ENCODE measurements at regions of chr6 and their contacts with region 1.

Region 1: GRCh38 chr6:3125815-3126214 is 7.3 kb downstream of the BPHL start:
- DNase-seq: no peak
- ATAC-seq: no peak
- H3K4me3 ChIP-seq: no peak overlapping the region
- H3K27ac ChIP-seq: no peak overlapping the region
- H3K4me1 ChIP-seq: no peaks in the 10 kb centered on the region
- H3K27me3 ChIP-seq: no peaks in the 10 kb centered on the region
- CTCF ChIP-seq: no peak
- POLR2A ChIP-seq: no peak
- RAD21 ChIP-seq: no peak

Region 2: GRCh38 chr6:2547355-2547754 is 578.5 kb before region 1 on chr6:
- CTCF ChIA-PET with region 1: no interaction called
- POLR2A ChIA-PET with region 1: no interaction called
- dilution Hi-C with region 1: no loop called
- in situ Hi-C with region 1: no loop called
- intact Hi-C with region 1: no loop called
- DNase-seq: no peak
- ATAC-seq: no peak
- H3K4me3 ChIP-seq: no peak overlapping the region
- H3K27ac ChIP-seq: no peak overlapping the region
- H3K4me1 ChIP-seq: peaks cover 8% of the 10 kb centered on the region
- H3K27me3 ChIP-seq: peaks cover 25% of the 10 kb centered on the region
- CTCF ChIP-seq: no peak
- POLR2A ChIP-seq: no peak
- RAD21 ChIP-seq: no peak

Region 3: DNA sequence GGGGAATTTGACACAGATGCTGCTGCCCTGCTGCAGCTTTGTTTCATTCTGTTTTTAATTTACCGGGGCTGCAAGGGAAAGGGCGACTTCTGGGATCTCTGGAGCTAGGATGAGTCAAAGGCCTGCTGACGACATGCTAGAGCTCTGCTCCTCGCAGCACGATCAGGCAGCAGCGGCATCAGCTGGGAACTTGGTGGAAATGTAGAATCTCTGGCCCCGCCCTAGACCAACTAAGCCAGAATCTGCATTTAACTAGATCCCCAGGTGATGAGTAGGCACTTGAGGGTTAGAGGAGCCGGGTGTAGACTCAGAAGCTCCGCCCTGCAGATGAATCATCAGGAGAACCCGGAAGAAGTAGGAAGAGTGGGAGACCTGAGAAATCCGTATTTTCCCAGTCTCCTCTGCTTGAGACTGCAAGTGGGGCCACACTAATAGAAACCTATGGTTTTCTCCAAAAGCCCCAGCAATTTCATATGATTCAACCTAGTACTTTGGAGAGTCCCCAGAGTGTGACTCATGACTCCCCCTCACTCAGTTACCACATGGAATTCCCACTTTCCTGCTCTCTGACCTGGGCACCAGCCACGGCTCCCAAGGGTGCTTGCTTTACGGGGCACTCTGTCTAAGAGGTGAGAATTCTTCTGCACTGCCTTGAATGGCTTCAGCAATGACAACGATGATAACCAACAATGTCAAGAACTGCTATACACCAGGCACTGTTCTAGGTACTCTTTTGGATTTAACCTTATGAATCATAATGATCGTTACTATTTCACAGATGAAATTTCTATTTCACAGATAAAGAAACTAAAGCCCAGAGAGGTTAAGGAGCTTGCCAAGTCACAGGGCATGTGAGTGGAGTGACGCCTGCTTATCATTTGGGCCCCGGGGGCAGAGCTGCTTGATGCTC is 83.6 kb after region 1 on chr6:
- CTCF ChIA-PET with region 1: interaction called, 4 read pairs
- POLR2A ChIA-PET with region 1: no interaction called
- dilution Hi-C with region 1: no loop called
- in situ Hi-C with region 1: no loop called
- intact Hi-C with region 1: loop called (anchors 1 kb)
- DNase-seq: peak; percentile 98
- ATAC-seq: peak; percentile 82
- H3K4me3 ChIP-seq: no peak overlapping the region
- H3K27ac ChIP-seq: peak overlapping the region; percentile 33; the same call in 1 of the 2 replicates
- H3K4me1 ChIP-seq: peaks cover 18% of the 10 kb centered on the region
- H3K27me3 ChIP-seq: no peaks in the 10 kb centered on the region
- CTCF ChIP-seq: peak; percentile 54
- POLR2A ChIP-seq: peak; percentile 66
- RAD21 ChIP-seq: peak; percentile 68

Region 4: DNA sequence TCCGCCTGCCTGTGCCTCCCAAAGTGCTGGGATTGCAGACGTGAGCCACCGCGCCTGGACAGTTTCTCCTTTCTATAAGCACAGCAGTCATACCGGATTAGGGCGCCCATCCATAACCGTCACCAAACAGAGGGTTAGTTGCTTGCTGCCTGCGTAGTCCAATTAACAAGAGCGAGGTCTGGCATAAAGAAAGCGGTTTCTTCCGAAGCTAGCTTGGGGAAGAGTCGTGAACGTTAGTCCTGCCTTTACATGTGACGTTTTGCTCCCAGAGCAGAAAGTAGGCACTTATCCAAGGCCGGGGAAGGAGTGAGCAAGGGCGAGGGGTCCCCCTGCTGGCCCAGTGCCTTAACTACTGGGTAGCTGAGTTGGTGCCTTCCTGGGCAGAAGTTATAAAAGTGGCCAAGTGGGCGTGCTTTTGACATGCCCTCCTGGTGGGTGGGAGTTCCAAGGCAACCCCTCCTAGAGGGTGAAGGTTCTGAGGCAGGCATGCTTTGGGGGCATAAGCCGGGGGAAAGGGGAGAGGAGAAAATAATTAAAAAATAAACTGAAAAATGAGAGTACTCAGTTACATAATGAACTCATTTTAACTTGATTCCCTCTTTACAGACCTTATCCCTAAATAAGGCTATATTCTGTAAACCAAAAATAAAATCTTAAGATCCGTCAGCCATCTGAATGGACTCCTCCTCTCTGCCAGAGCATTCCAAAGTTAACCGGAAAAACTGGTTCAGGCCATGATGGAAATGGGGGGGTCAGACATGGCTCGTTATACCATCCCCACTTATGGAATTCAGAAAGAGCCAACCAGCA is 865.1 kb after region 1 on chr6:
- CTCF ChIA-PET with region 1: no interaction called
- POLR2A ChIA-PET with region 1: no interaction called
- dilution Hi-C with region 1: no loop called
- in situ Hi-C with region 1: loop called (anchors 25 kb)
- intact Hi-C with region 1: loop called (anchors 2 kb)
- DNase-seq: peak; percentile 88
- ATAC-seq: peak; percentile 96
- H3K4me3 ChIP-seq: peak overlapping the region; percentile 5; the same call in 1 of the 2 replicates
- H3K27ac ChIP-seq: peak overlapping the region; percentile 11; the same call in 1 of the 2 replicates
- H3K4me1 ChIP-seq: peaks cover 6% of the 10 kb centered on the region
- H3K27me3 ChIP-seq: no peaks in the 10 kb centered on the region
- CTCF ChIP-seq: peak; percentile 97
- POLR2A ChIP-seq: no peak
- RAD21 ChIP-seq: peak; percentile 94